Natural killer cell (primary cell): ENCODE measurements at regions of chr3 and their contacts with region 1.

Region 1: DNA sequence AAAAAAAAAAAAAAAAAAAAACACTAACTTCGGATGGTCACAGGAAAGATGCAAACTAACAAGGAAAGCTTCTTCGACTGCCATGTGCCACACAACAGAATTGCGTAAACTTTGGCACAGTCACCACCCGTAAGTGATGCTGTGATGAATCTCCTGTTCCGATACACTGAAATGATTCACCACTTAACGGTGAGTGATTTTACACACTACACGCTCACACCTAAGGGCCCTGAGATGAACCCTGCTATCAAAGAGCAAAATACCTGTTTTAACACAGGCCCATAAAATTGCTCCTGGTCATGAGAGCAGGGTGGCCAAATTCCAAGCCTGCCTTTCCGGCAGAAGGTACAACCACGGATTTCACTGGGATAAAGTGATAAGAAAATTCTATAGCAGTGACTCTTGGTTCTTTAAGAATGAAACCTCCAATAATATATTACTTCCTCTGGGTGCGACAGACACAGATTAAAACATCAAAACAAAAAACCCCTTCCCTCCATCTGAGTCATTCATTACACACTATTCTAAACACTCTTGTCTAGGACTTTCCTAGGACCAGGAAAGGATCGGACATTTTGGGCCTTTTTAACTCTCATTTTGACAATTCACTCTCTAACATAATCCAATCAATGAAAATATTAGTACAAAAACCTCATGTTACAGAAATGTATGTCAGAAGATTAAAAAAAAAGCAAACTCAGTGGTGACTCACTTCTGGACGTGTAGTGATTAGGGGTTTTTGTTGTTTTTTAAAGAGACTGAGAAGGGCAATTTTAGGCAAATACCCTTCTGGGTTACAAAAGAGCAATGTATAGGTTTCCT is 28.3 kb downstream of the LRIG1 start:
- DNase-seq: peak in 1 of 2 donors; percentile 53
- ATAC-seq: peak; percentile 39 to 77 (median 65)
- H3K4me3 ChIP-seq: no peak overlapping the region
- H3K4me3 Mint-ChIP-seq: no peak overlapping the region
- H3K27ac ChIP-seq: no peak overlapping the region
- H3K27ac Mint-ChIP-seq: peak overlapping the region in 1 of 2 donors; percentile 74
- H3K4me1 ChIP-seq: peaks cover 9% of the 10 kb centered on the region
- H3K4me1 Mint-ChIP-seq: peaks cover 18 to 25% of the 10 kb centered on the region in 2 donors
- H3K27me3 ChIP-seq: no peaks in the 10 kb centered on the region
- H3K27me3 Mint-ChIP-seq: peaks cover 8% of the 10 kb centered on the region in 2 donors
- CTCF ChIP-seq: no peak

Region 2: GRCh38 chr3:66138336-66139313 is 333.9 kb before region 1 on chr3:
- intact Hi-C with region 1: no loop called
- DNase-seq: peak in 1 of 2 donors; percentile 4
- ATAC-seq: no peak
- H3K4me3 ChIP-seq: no peak overlapping the region
- H3K4me3 Mint-ChIP-seq: no peak overlapping the region
- H3K27ac ChIP-seq: no peak overlapping the region
- H3K27ac Mint-ChIP-seq: no peak overlapping the region
- H3K4me1 ChIP-seq: no peaks in the 10 kb centered on the region
- H3K4me1 Mint-ChIP-seq: no peaks in the 10 kb centered on the region
- H3K27me3 ChIP-seq: peaks cover 2% of the 10 kb centered on the region
- H3K27me3 Mint-ChIP-seq: peaks cover 0 to 6% of the 10 kb centered on the region in 2 donors
- CTCF ChIP-seq: no peak

Region 3: GRCh38 chr3:66302288-66302687 is 170.2 kb before region 1 on chr3:
- intact Hi-C with region 1: loop called (anchors 5 kb)
- DNase-seq: peak in 1 of 2 donors; percentile 84
- ATAC-seq: peak; percentile 61 to 79 (median 70)
- H3K4me3 ChIP-seq: no peak overlapping the region
- H3K4me3 Mint-ChIP-seq: peak overlapping the region; percentile 55
- H3K27ac ChIP-seq: peak overlapping the region; percentile 100
- H3K27ac Mint-ChIP-seq: no peak overlapping the region
- H3K4me1 ChIP-seq: peaks cover 51% of the 10 kb centered on the region
- H3K4me1 Mint-ChIP-seq: peaks cover 17 to 22% of the 10 kb centered on the region in 2 donors
- H3K27me3 ChIP-seq: no peaks in the 10 kb centered on the region
- H3K27me3 Mint-ChIP-seq: no peaks in the 10 kb centered on the region
- CTCF ChIP-seq: no peak

Region 4: DNA sequence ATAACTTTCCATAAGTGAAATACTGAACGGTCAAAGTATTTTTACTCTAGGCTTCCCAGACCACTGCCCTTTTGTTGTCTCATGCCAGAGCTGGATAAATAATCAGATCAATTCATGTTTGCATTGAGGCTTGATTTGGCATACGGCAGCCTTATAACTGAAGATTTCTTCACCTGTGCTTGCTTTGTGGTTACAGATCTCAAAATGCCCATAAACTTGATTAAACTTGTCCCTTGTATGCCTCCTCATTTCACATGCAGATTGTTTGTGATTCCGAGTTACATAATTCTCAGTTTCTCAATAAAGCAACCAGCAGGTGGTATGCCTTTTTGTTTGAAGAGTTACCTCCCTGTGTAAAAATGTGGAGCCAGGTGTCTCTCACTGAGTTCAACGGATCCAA is 239.7 kb after region 1 on chr3:
- intact Hi-C with region 1: no loop called
- DNase-seq: no peak
- ATAC-seq: no peak
- H3K4me3 ChIP-seq: no peak overlapping the region
- H3K4me3 Mint-ChIP-seq: no peak overlapping the region
- H3K27ac ChIP-seq: no peak overlapping the region
- H3K27ac Mint-ChIP-seq: no peak overlapping the region
- H3K4me1 ChIP-seq: no peaks in the 10 kb centered on the region
- H3K4me1 Mint-ChIP-seq: no peaks in the 10 kb centered on the region
- H3K27me3 ChIP-seq: no peaks in the 10 kb centered on the region
- H3K27me3 Mint-ChIP-seq: peaks cover 0 to 6% of the 10 kb centered on the region in 2 donors
- CTCF ChIP-seq: no peak